ENCODE measurements at regions of chrX and their contacts with region 1.

Region 1: DNA sequence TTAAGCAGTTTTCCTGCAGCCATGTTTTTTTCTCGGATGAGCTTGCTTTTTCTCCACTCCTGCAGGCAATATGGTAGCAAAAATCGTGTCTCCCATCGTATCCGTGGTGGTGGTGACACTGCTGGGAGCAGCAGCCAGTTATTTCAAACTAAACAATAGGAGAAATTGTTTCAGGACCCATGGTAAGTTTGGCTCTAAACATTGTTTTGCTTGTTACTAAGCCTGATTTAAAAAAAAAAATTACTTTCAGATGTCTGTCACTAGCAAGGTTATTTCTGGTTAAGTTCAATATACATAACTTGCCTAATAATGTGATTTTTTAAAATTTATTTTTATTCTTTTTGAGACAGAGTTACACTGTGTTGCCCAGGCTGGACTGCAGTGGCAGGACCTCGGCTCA is 17.5 kb upstream of the GYG2 start:
- DNase-seq: no peak
- H3K4me3 ChIP-seq: no peak overlapping the region
- H3K27ac ChIP-seq: no peak overlapping the region
- H3K4me1 ChIP-seq: no peaks in the 10 kb centered on the region
- H3K27me3 ChIP-seq: no peaks in the 10 kb centered on the region
- CTCF ChIP-seq: no peak

Region 2: GRCh38 chrX:2643880-2644279 is 167.4 kb before region 1 on chrX:
- intact Hi-C with region 1: loop called (anchors 2 kb)
- DNase-seq: no peak
- H3K4me3 ChIP-seq: no peak overlapping the region
- H3K27ac ChIP-seq: no peak overlapping the region
- H3K4me1 ChIP-seq: no peaks in the 10 kb centered on the region
- H3K27me3 ChIP-seq: no peaks in the 10 kb centered on the region
- CTCF ChIP-seq: no peak

Region 3: GRCh38 chrX:2701600-2701999 is 109.7 kb before region 1 on chrX:
- intact Hi-C with region 1: loop called (anchors 5 kb)
- DNase-seq: no peak
- H3K4me3 ChIP-seq: no peak overlapping the region
- H3K27ac ChIP-seq: no peak overlapping the region
- H3K4me1 ChIP-seq: peaks cover 11% of the 10 kb centered on the region
- H3K27me3 ChIP-seq: no peaks in the 10 kb centered on the region
- CTCF ChIP-seq: no peak

Region 4: DNA sequence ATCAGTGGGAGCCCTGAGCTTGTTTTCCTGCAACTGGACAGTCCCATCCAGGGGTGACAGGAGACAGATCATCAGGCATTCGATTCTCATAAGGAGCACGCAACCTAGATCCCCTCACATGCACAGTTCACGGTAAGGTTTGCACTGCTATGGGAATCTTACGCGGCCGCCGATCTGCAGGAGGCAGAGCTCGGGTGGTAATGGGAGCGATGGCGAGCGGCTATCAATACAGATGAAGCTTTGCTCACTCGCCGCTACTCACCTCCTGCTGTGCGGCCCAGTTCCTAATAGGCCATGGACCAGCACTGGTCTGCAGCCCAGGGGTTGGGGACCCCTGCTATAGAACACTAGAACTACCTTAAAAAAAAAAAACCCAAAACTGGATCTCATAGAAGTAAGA is 72.5 kb after region 1 on chrX:
- intact Hi-C with region 1: no loop called
- DNase-seq: no peak
- H3K4me3 ChIP-seq: no peak overlapping the region
- H3K27ac ChIP-seq: no peak overlapping the region
- H3K4me1 ChIP-seq: no peaks in the 10 kb centered on the region
- H3K27me3 ChIP-seq: no peaks in the 10 kb centered on the region
- CTCF ChIP-seq: no peak